Aorta (tissue), 5 donors: ENCODE measurements at regions of chr10 and their contacts with region 1.

Region 1: DNA sequence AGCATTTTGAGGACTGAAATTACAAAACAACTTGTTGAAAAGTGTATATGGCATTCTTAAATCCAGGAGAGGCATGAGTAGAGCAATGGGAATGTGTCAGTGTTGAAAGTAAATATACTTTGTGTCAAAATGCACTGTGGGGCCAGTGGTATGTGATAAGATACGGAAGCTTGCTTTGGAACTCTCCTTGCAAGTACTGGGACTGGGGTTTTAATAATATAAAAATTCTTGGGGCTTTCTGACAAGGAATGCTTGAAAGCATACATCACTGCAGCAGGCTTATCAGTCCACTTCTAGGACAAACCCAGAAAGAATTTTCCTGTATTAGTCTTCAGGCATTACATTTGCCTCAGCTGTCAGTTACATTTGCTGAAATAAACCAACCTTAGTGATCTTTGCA is 472.8 kb upstream of the FZD8 start:
- DNase-seq: no peak
- ATAC-seq: no peak
- H3K4me3 ChIP-seq: no peak overlapping the region
- H3K27ac ChIP-seq: no peak overlapping the region
- H3K4me1 ChIP-seq: peaks cover 0 to 13% of the 10 kb centered on the region in 2 donors
- H3K27me3 ChIP-seq: no peaks in the 10 kb centered on the region

Region 2: GRCh38 chr10:35795131-35795819 is 319.6 kb before region 1 on chr10:
- intact Hi-C with region 1: loop called in 1 of 2 experiments (anchors 5 kb)
- DNase-seq: peak in 1 of 2 donors; percentile 63
- ATAC-seq: peak; percentile 38
- H3K4me3 ChIP-seq: no peak overlapping the region
- H3K27ac ChIP-seq: no peak overlapping the region
- H3K4me1 ChIP-seq: no peaks in the 10 kb centered on the region
- H3K27me3 ChIP-seq: no peaks in the 10 kb centered on the region

Region 3: GRCh38 chr10:36266928-36267327 is 152.0 kb after region 1 on chr10:
- intact Hi-C with region 1: no loop called
- DNase-seq: no peak
- ATAC-seq: no peak
- H3K4me3 ChIP-seq: no peak overlapping the region
- H3K27ac ChIP-seq: no peak overlapping the region
- H3K4me1 ChIP-seq: no peaks in the 10 kb centered on the region
- H3K27me3 ChIP-seq: no peaks in the 10 kb centered on the region